ENCODE measurements at regions of chr5 and their contacts with region 1.

Region 1: DNA sequence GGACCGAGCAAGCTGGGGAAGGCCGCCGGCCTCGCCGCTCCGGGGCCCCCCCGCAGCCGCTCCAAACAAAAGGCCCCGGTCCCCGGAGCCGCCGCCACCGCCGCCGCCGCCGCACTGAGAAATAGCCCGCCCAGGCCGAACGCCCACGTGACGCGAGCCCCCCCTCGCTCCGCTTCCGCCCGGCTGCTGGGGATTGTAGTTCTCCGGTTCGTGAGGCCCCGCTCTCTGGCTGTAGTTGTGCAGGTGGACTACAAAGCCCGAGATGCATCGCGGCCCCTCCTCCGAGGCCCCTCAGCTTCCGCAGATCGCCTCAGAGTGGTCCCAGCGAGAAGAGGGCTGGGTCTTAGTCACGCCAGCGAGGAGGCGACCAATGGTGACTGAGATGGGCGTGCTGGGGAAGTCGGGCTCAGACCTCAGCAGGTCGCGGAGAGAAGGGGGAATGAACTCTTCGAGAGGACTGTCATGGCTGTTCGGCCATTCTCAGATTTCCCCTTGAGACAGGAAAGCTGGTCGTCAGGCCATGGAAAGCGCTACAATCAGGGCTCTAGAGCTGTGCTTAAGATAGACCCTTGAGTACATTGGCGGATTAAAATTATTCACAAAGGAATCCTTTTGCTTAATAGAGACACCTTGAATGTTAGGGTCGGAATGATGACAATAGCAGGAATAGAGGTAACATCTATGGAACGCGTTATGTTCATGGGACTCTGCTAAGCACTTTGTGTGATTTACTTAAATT is 489 bp upstream of the PANK3 start:
- DNase-seq: peak; percentile 99
- H3K4me3 ChIP-seq: peak overlapping the region; percentile 97
- H3K27ac ChIP-seq: peak overlapping the region; percentile 97
- H3K4me1 ChIP-seq: peaks cover 55% of the 10 kb centered on the region
- H3K27me3 ChIP-seq: no peaks in the 10 kb centered on the region
- CTCF ChIP-seq: no peak

Region 2: DNA sequence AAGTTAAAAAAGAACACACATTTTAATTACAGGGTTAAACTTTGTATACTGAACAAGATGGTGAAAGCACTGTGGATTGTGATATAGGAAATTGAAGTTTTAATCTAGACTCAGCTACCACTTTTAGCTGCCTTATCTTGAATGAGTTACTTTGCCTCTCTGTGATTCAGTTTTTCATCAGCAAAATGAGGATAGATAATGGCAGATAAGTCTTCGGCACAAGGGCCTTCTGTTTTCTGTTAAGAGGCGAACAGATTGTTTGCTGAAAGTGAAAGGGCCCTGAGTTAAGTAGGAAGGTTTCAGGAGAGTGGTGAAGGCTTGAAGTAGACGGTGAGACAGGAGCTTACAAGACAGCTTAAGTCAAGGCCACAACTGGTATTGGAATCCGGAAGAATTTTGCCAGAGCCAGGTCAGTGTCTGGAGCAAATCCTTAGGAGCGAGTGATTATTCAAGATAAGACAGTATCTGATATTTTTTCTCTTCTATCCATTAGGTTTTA is 85.6 kb before region 1 on chr5:
- intact Hi-C with region 1: loop called (anchors 10 kb)
- DNase-seq: no peak
- H3K4me3 ChIP-seq: no peak overlapping the region
- H3K27ac ChIP-seq: no peak overlapping the region
- H3K4me1 ChIP-seq: no peaks in the 10 kb centered on the region
- H3K27me3 ChIP-seq: no peaks in the 10 kb centered on the region
- CTCF ChIP-seq: no peak